ENCODE measurements at regions of chr1 and their contacts with region 1.

Region 1: GRCh38 chr1:26321315-26322041 is 3.7 kb downstream of the CD52 start:
- DNase-seq: peak; percentile 86 to 98 (median 92)
- ATAC-seq: peak; percentile 66 to 81
- H3K4me3 Mint-ChIP-seq: peak overlapping the region; percentile 79 to 100 (median 94)
- H3K27ac Mint-ChIP-seq: peak overlapping the region; percentile 87 to 99 (median 94)
- H3K4me1 Mint-ChIP-seq: peaks cover 28 to 70% (median 64%) of the 10 kb centered on the region in 4 donors
- H3K27me3 Mint-ChIP-seq: no peaks in the 10 kb centered on the region

Region 2: DNA sequence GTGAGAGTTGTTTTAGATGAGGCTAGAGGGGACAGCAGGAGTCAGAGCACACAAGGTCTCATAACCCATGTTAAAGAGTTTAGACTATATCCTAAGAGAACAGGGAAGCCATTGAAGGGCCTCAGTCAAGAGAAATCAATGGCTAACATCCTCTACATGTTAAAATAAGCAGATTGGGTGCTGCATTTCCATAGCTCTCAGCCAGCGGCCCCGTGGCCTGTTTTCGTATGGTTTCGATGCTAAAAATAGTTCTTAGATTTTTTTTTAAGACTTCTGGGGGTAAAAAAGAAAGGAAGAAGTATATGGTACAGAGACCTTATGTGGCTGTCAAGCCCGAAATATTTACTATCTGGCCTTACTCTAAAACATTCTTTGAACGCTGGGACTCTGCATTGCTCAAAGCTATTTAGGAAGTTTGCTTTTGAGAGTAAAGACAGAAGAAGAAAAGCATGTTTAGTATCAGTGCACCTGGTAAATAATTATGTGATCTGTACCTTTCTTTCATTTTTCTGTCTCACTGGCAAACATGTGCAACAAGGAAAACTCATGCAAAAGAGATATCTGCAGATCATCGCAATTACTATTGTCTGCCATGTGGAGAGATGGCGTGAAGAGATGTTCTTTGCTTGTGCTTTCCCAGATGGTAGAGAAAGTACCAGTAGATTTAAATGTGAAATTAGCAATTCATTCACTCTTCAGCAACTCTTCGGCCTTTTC is 201.4 kb before region 1 on chr1:
- POLR2A ChIA-PET with region 1: no interaction called
- DNase-seq: peak in 1 of 10 donors; percentile 6
- ATAC-seq: peak in 1 of 2 donors; percentile 43
- H3K4me3 Mint-ChIP-seq: peak overlapping the region in 5 of 10 donors; percentile 11 to 55 (median 30)
- H3K27ac Mint-ChIP-seq: peak overlapping the region; percentile 46 to 87 (median 74)
- H3K4me1 Mint-ChIP-seq: peaks cover 6 to 47% (median 28%) of the 10 kb centered on the region in 4 donors
- H3K27me3 Mint-ChIP-seq: no peaks in the 10 kb centered on the region

Region 3: DNA sequence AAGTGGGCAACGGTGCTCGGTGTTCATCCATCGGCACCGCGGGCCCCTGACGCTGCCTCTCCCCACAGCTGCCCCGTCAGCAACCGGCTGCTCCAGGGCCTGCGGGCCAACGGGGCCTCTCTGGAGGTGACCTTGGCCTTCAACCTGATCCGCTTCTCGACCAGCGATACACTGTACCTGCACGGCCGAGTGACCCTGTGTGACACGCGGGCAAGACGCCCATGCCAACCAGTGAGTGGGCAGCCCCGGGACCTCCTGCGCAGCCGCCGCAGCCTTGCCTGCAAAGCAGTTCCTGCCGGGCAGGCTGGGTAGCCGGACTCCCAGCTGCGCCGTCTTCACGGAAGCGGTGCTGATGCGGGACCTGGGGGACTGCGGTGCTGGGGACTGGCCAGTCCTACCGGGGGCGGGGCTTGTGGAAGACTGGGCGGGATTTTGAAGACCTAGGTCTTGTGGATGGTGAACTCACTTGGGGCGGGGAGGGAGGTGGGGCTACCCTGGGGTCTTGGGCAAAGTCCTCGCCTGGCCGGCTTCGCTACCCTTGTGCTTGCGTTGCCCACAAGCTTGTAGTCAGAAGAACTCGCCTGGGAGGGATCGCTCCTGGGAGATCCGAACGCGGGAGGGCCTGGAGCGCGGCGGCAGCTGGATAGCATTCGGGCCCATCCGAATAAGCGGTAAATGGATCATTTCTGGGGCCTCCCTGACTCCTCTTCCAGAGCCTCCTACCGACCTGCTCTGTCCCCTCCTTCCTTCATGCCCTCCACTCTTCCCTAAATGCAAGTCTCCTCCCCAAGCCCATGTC is 96.2 kb before region 1 on chr1:
- POLR2A ChIA-PET with region 1: no interaction called
- DNase-seq: peak in 6 of 10 donors; percentile 11 to 69 (median 27)
- ATAC-seq: peak; percentile 74 to 92
- H3K4me3 Mint-ChIP-seq: peak overlapping the region; percentile 69 to 85 (median 76)
- H3K27ac Mint-ChIP-seq: peak overlapping the region in 6 of 10 donors; percentile 34 to 71 (median 54)
- H3K4me1 Mint-ChIP-seq: peaks cover 6 to 18% (median 13%) of the 10 kb centered on the region in 4 donors
- H3K27me3 Mint-ChIP-seq: peaks cover 6 to 22% (median 17%) of the 10 kb centered on the region in 5 donors

Region 4: DNA sequence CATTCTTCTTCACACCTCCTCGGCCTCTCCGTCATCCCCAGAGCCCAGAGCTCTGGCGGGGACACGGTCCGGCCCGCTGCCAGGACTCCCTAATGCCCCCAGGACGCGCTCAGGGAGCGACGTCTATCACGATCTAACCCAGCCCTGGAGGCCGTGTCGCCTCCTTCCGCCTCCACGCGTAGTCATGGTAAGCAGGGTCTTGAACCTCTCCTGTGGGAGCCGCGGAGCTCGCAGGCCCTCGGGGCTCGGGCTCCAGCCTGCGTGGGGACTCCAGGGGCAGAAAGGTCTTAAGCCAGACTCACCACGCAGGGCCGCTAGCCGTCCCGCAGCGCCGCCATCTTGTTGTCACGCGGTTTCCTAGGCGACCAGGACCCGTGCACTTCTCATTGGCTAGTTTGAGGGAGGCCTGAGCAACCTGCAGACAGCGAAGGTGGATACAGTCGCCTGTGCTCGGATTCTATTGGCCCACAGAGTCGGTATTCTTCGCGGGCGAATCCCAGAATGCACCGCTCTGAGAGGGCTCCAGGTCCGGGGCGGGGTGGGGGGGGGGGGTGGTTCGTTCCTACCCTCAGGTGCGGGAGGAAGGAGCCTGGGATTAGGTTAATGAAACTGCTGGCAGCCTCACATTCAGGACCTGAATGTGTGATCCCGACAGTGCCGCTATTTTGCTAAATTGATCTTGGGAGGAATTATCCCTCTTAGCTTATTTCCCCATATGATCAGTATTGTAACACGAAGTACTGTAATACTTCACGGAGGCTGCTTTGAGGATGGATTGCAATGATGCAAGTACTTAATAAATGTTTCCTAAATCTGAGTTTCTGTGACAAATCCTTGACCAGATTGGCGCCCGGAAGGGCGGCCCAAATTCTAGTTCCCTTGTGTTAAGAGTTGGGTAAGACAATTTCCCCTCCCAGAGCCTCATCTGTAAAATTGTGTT is 14.9 kb before region 1 on chr1 and contains the start of gene UBXN11:
- POLR2A ChIA-PET with region 1: interaction called, 2,161 read pairs
- DNase-seq: peak; percentile 79 to 97 (median 90)
- ATAC-seq: peak; percentile 94 to 97
- H3K4me3 Mint-ChIP-seq: peak within 1 kb of the TSS; percentile 90 to 100 (median 98)
- H3K27ac Mint-ChIP-seq: peak within 1 kb of the TSS; percentile 91 to 100 (median 98)
- H3K4me1 Mint-ChIP-seq: peaks cover 20 to 37% (median 33%) of the 10 kb centered on the region in 4 donors
- H3K27me3 Mint-ChIP-seq: no peaks in the 10 kb centered on the region
- polyA plus RNA-seq, gene UBXN11: 9.1 to 14.7 (median 12.4) TPM

Region 5: GRCh38 chr1:26378088-26378878 is 56.8 kb after region 1 on chr1:
- POLR2A ChIA-PET with region 1: interaction called, 19 read pairs
- DNase-seq: peak in 9 of 10 donors; percentile 33 to 87 (median 71)
- ATAC-seq: peak; percentile 93 to 98
- H3K4me3 Mint-ChIP-seq: peak overlapping the region; percentile 65 to 84 (median 74)
- H3K27ac Mint-ChIP-seq: peak overlapping the region; percentile 66 to 94 (median 90)
- H3K4me1 Mint-ChIP-seq: peaks cover 40 to 74% (median 65%) of the 10 kb centered on the region in 4 donors
- H3K27me3 Mint-ChIP-seq: peaks cover 0 to 3% (median 0%) of the 10 kb centered on the region in 5 donors